ENCODE measurements at regions of chr9 and their contacts with region 1.

Region 1: DNA sequence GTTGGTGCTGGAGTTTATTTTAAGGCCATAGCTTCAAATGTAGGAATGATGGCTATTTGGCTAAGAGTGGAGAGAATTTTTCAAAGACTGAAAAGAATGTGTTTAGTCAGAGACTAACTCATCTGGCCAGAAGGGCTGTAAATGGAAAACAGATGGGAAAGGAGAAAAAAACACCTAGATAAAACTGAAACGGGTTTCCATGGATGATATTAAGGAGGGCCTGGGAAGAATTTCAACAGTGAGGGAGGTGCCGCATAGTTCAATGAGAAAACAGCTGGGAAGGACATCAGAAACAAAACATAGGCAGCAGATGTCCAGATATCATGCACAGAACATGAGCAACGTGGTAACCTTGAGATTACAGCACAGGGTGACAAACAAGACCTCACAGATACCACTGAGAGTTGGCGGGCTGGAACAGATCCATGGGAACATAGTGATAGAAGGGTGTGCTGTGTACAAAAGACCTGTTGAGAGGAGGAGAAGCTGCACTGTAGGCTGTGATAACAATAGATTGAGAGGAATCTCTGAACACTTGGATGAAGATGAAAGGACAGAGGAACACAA is 31.2 kb upstream of the RAD23B start:
- DNase-seq: no peak
- H3K4me3 Mint-ChIP-seq: no peak overlapping the region
- H3K27ac Mint-ChIP-seq: no peak overlapping the region
- H3K4me1 Mint-ChIP-seq: no peaks in the 10 kb centered on the region
- H3K27me3 Mint-ChIP-seq: peaks cover 12% of the 10 kb centered on the region

Region 2: GRCh38 chr9:106456581-106456980 is 795.3 kb before region 1 on chr9:
- CTCF ChIA-PET with region 1: no interaction called
- intact Hi-C with region 1: no loop called
- DNase-seq: no peak
- H3K4me3 Mint-ChIP-seq: no peak overlapping the region
- H3K27ac Mint-ChIP-seq: no peak overlapping the region
- H3K4me1 Mint-ChIP-seq: no peaks in the 10 kb centered on the region
- H3K27me3 Mint-ChIP-seq: no peaks in the 10 kb centered on the region

Region 3: GRCh38 chr9:107266624-107267368 is 15.0 kb after region 1 on chr9:
- CTCF ChIA-PET with region 1: no interaction called
- intact Hi-C with region 1: loop called (anchors 2 kb)
- DNase-seq: no peak
- H3K4me3 Mint-ChIP-seq: no peak overlapping the region
- H3K27ac Mint-ChIP-seq: no peak overlapping the region
- H3K4me1 Mint-ChIP-seq: no peaks in the 10 kb centered on the region
- H3K27me3 Mint-ChIP-seq: no peaks in the 10 kb centered on the region